ENCODE measurements at regions of chr3 and their contacts with region 1.

Region 1: DNA sequence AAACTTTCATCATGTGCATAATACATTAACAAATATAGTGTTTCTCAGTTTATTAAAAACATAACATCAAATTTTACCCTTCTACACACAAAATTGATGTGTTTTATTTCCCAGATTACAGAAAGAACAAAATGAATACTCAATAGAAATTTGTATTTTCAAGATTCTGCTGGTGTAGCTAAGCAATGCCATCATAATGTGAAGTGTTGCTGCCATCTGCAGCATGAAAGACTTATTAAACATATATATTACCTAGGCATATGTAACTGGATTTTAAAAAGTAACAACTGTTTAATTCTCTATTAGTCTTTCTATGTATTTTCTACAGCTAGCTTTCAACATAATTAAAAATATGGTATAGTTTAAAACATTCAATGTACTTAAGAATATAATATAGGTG is 27.5 kb downstream of the PLSCR5 start:
- DNase-seq: peak; percentile 62
- H3K4me3 ChIP-seq: no peak overlapping the region
- H3K27ac ChIP-seq: no peak overlapping the region
- H3K4me1 ChIP-seq: no peaks in the 10 kb centered on the region
- H3K27me3 ChIP-seq: no peaks in the 10 kb centered on the region
- CTCF ChIP-seq: peak; percentile 52; the same call in 1 of the 2 replicates

Region 2: GRCh38 chr3:146189519-146190173 is 388.0 kb before region 1 on chr3:
- CTCF ChIA-PET with region 1: interaction called, 20 read pairs
- POLR2A ChIA-PET with region 1: no interaction called
- intact Hi-C with region 1: no loop called
- DNase-seq: peak; percentile 71
- H3K4me3 ChIP-seq: no peak overlapping the region
- H3K27ac ChIP-seq: no peak overlapping the region
- H3K4me1 ChIP-seq: peaks cover under 1% of the 10 kb centered on the region
- H3K27me3 ChIP-seq: no peaks in the 10 kb centered on the region
- CTCF ChIP-seq: peak; percentile 75

Region 3: DNA sequence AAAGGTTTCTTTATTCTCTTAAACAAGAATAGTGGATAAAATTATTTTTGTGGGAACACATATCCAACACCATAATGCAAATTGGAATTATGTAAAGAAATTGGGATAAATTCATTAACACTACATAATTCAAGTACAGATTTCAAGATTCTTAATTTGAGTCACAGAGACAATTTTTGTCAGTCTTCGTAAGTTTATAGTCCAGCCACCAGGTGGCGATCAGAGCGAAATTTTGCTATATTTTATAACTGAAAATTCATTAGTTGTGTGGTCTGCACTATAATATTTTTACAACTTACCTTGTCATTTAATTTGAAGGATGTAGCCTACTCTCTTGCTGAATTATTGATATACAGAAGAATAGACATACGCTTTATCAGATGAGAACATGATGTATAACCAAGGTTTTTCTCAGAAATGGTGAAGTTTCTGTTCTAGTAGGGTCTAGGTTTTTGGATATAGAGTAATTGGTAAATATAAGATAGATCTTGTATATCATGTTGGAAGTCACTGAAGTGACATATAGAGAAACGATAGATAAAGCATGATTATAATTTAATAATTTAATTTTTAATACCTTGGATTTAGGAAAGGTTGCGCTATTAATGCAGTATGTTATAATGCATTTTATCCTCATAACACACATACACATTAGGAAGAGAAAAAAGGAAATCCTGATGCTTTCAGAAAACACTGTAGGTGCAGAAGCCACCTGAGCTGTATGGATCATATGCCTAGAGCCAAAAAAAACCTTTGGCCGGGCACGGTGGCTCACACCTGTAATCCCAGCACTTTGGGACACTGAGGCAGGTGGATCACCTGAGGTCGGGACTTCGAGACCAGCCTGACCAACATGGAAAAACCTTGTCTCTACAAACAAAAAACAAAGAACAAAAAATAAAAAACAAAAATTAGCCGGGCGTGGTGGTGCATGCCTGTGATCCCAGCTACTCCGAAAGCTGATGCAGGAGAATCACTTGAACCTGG is 358.5 kb before region 1 on chr3:
- CTCF ChIA-PET with region 1: no interaction called
- POLR2A ChIA-PET with region 1: no interaction called
- intact Hi-C with region 1: loop called (anchors 2 kb)
- DNase-seq: peak; percentile 47
- H3K4me3 ChIP-seq: no peak overlapping the region
- H3K27ac ChIP-seq: no peak overlapping the region
- H3K4me1 ChIP-seq: no peaks in the 10 kb centered on the region
- H3K27me3 ChIP-seq: no peaks in the 10 kb centered on the region
- CTCF ChIP-seq: peak; percentile 80

Region 4: GRCh38 chr3:146334151-146334550 is 243.5 kb before region 1 on chr3:
- CTCF ChIA-PET with region 1: interaction called, 3 read pairs
- POLR2A ChIA-PET with region 1: no interaction called
- intact Hi-C with region 1: loop called (anchors 1 kb)
- DNase-seq: peak; percentile 7
- H3K4me3 ChIP-seq: no peak overlapping the region
- H3K27ac ChIP-seq: no peak overlapping the region
- H3K4me1 ChIP-seq: no peaks in the 10 kb centered on the region
- H3K27me3 ChIP-seq: no peaks in the 10 kb centered on the region
- CTCF ChIP-seq: 0 out of 2 replicates have a peak, but pooled peaks have one; percentile 23

Measured in A673 (cell line).